A673 (cell line): ENCODE measurements at regions of chr13 and their contacts with region 1.

Region 1: GRCh38 chr13:94813920-94814500 is 101.7 kb upstream of the SOX21 start:
- DNase-seq: no peak
- H3K4me3 ChIP-seq: no peak overlapping the region
- H3K27ac ChIP-seq: no peak overlapping the region
- H3K4me1 ChIP-seq: no peaks in the 10 kb centered on the region
- H3K27me3 ChIP-seq: no peaks in the 10 kb centered on the region
- CTCF ChIP-seq: no peak

Region 2: DNA sequence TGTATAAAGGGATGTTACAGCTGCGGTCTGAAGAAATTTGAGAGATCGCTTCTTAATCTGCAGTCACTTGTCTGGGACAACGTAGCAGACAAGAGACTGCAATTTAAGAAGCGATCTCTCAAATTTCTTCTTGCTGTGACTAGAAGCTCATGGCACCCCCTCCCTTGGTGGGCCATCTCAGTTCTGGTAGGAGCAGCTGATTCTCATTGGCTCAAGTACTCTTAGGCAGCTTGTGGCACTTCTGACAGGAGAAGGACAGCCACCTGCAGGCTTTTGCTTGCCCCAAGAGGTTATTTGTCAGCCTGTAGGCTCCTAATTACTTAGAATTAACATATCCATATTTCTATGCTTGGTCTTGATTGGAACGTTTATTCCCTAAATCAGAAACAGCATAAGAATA is 837.5 kb before region 1 on chr13:
- CTCF ChIA-PET with region 1: no interaction called
- POLR2A ChIA-PET with region 1: no interaction called
- intact Hi-C with region 1: no loop called
- DNase-seq: no peak
- H3K4me3 ChIP-seq: no peak overlapping the region
- H3K27ac ChIP-seq: no peak overlapping the region
- H3K4me1 ChIP-seq: peaks cover 40% of the 10 kb centered on the region
- H3K27me3 ChIP-seq: no peaks in the 10 kb centered on the region
- CTCF ChIP-seq: no peak

Region 3: GRCh38 chr13:94864474-94864873 is 50.5 kb after region 1 on chr13:
- CTCF ChIA-PET with region 1: no interaction called
- POLR2A ChIA-PET with region 1: no interaction called
- intact Hi-C with region 1: loop called (anchors 2 kb)
- DNase-seq: peak; percentile 35
- H3K4me3 ChIP-seq: no peak overlapping the region
- H3K27ac ChIP-seq: no peak overlapping the region
- H3K4me1 ChIP-seq: peaks cover 5% of the 10 kb centered on the region
- H3K27me3 ChIP-seq: peaks cover 48% of the 10 kb centered on the region
- CTCF ChIP-seq: no peak